ENCODE measurements at regions of chr22 and their contacts with region 1.

Region 1: DNA sequence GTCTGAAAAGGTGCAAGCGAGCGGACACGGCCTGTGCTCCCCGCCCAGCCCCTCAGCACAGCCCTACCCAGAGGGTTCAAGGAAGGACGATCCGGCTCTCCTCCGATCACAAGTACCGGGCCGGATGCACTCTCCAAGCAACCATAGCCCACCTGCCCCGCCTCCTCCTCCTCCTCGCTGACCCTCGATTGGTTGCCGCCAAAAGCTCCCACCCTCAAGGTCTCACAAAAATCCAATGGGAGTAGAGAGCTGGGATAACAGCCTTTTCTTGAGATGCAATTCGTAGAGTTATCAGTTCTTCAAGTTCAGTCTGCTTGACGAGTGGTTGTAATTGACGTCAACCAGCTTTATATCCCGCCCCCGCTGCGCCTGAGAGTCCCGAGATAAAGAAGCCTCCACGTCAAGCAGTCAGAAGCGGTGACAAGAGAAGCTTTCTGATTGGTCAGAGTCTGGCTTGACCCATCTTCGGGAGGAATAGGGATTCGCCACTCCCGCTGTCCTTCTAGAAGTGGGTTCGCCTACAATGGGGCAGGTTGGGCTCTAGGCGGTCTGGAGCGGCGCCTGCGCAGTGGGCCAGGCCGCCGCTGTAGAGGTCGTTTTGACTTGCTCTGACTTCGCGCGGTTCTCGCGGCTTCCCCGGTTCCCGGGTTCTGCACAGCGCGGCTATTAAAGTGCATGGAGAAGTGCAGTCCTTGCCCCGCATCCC is at the start of gene IFT27:
- DNase-seq: peak; percentile 99
- ATAC-seq: peak; percentile 97 to 99
- total RNA-seq, gene IFT27: 27.6 to 28.1 TPM

Region 2: GRCh38 chr22:36546092-36546804 is 229.9 kb before region 1 on chr22:
- intact Hi-C with region 1: loop called in 1 of 2 experiments (anchors 10 kb)
- DNase-seq: peak; percentile 39
- ATAC-seq: peak; percentile 63

Region 3: DNA sequence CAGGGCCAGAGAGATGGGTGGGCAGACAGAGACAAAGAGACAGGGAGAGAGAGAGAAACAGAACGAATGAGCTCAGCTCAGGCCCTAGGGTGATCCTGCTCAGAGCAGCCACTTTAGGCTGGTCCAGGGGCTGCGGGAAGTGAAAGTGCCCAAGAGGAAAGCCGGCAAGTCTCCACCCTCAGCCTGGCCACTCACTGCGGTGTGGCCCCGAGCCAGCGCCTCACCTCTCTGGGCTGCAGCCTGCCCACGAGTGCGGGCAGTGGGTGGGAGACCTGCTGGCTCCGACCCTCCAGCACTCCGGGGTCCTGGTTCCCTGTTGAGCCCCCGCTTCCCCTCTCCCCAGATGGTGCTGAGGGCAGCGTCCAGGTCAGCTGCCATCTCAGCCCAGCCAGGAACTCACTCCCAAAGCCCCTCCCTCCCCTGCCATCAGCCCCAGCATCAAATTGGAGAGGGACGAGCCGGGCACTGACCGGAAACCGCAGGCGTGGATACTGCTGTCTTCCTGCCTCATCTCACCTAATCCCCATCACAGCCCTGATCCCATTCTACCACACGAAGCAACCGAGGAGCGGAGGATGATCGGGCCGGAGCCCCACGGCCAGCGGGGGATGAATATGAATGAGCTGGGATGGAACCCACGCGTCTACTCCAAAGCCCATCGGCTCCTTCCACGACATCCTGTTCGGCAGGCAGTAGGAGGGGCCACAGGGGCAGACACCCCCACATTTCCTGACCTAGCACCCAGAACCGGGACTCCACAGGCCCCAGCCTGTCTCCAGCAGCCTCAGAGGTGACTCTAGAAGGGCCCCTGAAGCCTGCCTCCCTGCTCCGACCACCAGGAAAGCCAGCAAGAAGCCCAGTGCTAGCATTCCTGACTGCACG is 634.3 kb after region 1 on chr22:
- intact Hi-C with region 1: no loop called
- DNase-seq: peak; percentile 28
- ATAC-seq: peak in 1 of 2 donors; percentile 49

Measured in left cardiac atrium (tissue), 4 donors.